ENCODE measurements at regions of chr7 and their contacts with region 1.

Region 1: DNA sequence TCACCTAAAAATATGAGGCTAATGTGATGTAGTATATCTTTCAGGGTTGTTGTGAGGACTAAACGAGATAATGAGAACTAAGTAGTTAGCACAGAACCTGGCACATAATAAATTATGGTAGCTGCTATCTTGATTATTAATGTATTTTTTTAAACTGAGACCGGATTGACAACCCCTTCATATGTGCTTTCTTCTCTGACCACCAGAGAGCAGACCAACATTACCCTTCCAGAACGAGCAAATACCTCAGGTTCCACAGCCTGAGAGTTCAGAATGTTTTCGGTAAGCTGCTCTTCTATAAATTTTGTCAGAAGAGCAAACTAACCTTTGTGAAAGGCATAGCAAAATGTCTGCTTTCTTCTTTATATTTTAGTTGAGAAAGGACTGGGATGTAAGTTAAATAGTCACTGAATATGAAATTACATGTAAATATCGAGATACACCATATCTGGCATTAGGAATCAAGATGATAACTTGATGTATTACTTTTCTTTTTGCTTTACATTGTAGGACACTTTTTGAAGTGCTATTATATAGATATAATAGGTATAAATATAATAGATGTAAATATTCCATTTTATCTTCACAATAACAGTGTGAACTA is 13.6 kb upstream of the BPGM start:
- DNase-seq: peak in 1 of 2 donors; percentile 83
- ATAC-seq: peak; percentile 73 to 90 (median 89)
- H3K4me3 ChIP-seq: no peak overlapping the region
- H3K4me3 Mint-ChIP-seq: no peak overlapping the region
- H3K27ac ChIP-seq: no peak overlapping the region
- H3K27ac Mint-ChIP-seq: no peak overlapping the region
- H3K4me1 ChIP-seq: no peaks in the 10 kb centered on the region
- H3K4me1 Mint-ChIP-seq: peaks cover 16 to 17% of the 10 kb centered on the region in 2 donors
- H3K27me3 ChIP-seq: peaks cover 3% of the 10 kb centered on the region
- H3K27me3 Mint-ChIP-seq: peaks cover 11 to 31% of the 10 kb centered on the region in 2 donors
- CTCF ChIP-seq: peak; percentile 78

Region 2: GRCh38 chr7:134654104-134654775 is 21.2 kb after region 1 on chr7:
- intact Hi-C with region 1: no loop called
- DNase-seq: no peak
- ATAC-seq: no peak
- H3K4me3 ChIP-seq: no peak overlapping the region
- H3K4me3 Mint-ChIP-seq: no peak overlapping the region
- H3K27ac ChIP-seq: no peak overlapping the region
- H3K27ac Mint-ChIP-seq: peak overlapping the region in 1 of 2 donors; percentile 63
- H3K4me1 ChIP-seq: no peaks in the 10 kb centered on the region
- H3K4me1 Mint-ChIP-seq: peaks cover 73 to 85% of the 10 kb centered on the region in 2 donors
- H3K27me3 ChIP-seq: no peaks in the 10 kb centered on the region
- H3K27me3 Mint-ChIP-seq: no peaks in the 10 kb centered on the region
- CTCF ChIP-seq: no peak

Region 3: DNA sequence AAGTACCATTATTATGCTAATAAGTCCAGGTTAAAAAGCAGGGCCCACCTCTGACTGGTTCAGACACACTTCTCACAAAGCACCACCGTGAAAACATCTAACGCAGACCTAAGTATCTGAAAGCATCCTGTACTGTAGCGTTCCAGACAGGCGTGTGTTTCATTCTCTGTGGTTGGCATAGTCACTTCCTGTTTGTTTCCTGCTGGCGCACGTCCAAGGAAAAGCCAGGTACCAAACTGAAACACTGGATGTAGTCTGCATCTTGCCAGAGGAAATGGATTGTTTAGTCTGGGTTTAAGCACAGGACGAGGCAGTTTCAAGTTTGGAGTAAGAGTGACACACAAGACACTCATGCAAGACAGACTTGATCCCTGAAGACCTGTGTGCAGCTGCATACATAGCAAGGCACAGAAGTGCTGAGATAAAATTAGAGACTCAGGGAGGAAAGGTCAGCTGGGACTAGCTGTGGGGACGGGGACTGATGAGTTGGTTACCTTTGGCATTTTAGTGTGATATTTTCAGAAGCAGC is 36.9 kb after region 1 on chr7:
- intact Hi-C with region 1: loop called (anchors 5 kb)
- DNase-seq: peak; percentile 26 to 94
- ATAC-seq: peak; percentile 74 to 80 (median 79)
- H3K4me3 ChIP-seq: no peak overlapping the region
- H3K4me3 Mint-ChIP-seq: peak overlapping the region; percentile 69
- H3K27ac ChIP-seq: peak overlapping the region; percentile 35
- H3K27ac Mint-ChIP-seq: peak overlapping the region; percentile 90 to 95
- H3K4me1 ChIP-seq: peaks cover 10% of the 10 kb centered on the region
- H3K4me1 Mint-ChIP-seq: peaks cover 48% of the 10 kb centered on the region in 2 donors
- H3K27me3 ChIP-seq: no peaks in the 10 kb centered on the region
- H3K27me3 Mint-ChIP-seq: no peaks in the 10 kb centered on the region
- CTCF ChIP-seq: no peak

Region 4: DNA sequence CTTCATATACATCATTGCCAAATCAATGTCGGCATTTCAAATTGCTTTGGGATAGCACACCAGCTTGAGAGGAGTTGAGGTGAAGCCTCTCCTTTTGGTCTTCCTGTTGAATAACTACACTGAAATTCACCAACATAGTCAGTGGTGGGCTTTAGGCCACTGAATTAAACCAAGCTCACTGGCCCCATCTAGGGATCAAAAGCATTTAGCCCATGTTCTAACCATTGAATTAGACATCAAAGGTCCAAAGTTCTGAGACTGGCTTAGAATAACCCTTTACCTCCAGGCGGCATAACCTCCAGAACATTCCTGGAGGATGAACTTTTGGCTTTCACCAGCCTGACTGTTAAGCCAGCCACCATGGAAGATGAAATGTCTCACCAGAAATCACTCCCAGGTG is 68.2 kb after region 1 on chr7:
- intact Hi-C with region 1: loop called (anchors 1 kb)
- DNase-seq: peak in 1 of 2 donors; percentile 67
- ATAC-seq: peak; percentile 55 to 78 (median 70)
- H3K4me3 ChIP-seq: no peak overlapping the region
- H3K4me3 Mint-ChIP-seq: no peak overlapping the region
- H3K27ac ChIP-seq: no peak overlapping the region
- H3K27ac Mint-ChIP-seq: no peak overlapping the region
- H3K4me1 ChIP-seq: no peaks in the 10 kb centered on the region
- H3K4me1 Mint-ChIP-seq: no peaks in the 10 kb centered on the region
- H3K27me3 ChIP-seq: no peaks in the 10 kb centered on the region
- H3K27me3 Mint-ChIP-seq: peaks cover 6 to 7% of the 10 kb centered on the region in 2 donors
- CTCF ChIP-seq: peak; percentile 50

Region 5: DNA sequence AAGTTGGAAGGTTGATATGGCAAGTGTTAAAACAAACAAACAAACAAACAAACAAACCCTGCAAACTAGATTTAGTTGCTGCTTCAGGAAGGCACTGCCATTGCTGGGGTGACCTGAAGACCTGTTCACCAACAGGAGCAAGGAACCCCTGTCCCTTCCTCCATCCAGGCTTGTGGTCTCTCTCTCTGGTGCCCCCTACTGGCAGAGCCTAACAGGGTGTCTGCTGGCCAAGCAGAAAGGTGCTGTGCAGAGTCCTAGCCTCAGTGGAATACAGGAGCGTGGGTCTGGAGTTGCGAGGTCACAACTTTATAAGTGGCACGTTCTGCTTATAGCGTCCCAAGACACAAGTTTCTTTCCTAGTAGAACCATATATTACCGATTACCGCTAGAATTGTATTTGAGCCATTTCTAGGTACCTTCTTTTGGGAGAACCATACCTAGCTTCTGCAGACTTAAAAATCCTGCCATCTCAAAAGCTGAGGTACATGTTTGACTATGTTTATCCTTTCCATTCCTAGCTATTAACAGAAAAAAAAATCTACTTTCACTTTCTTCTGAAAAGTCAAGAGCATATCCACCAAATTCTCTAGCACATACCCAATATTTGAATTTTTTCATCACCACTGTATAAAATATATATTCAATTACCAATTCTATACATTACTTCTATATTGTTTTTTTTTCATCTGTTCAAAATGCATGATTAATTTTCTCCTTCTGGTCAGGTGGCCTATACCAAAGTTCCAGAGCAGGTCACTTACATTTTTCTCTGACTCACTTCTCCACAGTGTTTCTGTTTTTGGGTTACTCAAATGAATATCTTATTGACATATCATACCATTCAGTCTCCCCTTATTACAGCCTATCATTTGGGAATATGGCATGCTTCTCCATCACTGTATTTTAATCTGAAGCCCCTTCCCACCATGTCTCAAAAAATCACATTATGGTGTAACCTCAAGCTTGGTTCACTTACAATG is 117.3 kb after region 1 on chr7:
- intact Hi-C with region 1: loop called (anchors 1 kb)
- DNase-seq: peak; percentile 46 to 82
- ATAC-seq: peak; percentile 80 to 87 (median 86)
- H3K4me3 ChIP-seq: no peak overlapping the region
- H3K4me3 Mint-ChIP-seq: no peak overlapping the region
- H3K27ac ChIP-seq: no peak overlapping the region
- H3K27ac Mint-ChIP-seq: no peak overlapping the region
- H3K4me1 ChIP-seq: no peaks in the 10 kb centered on the region
- H3K4me1 Mint-ChIP-seq: no peaks in the 10 kb centered on the region
- H3K27me3 ChIP-seq: no peaks in the 10 kb centered on the region
- H3K27me3 Mint-ChIP-seq: peaks cover 3 to 15% of the 10 kb centered on the region in 2 donors
- CTCF ChIP-seq: peak; percentile 72

Region 6: DNA sequence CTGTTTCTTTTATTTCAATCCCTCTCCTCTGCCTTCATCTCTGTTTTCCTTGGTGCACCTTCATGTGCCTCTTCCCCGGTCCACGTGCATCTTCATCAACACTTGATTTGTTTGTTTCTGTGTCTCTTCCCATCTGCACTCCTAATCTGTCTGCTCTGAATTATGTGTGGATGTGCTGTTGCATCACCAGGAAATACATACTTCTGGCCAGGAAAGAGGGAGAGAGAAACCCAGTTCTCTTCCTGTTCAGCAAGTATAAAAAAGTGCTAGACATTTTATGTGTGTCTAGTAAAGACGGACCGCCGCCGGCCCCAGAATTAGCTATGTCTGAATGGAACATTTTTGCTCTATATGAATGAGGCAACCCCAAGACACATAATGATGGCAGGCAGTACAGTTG is 240.2 kb after region 1 on chr7:
- intact Hi-C with region 1: no loop called
- DNase-seq: no peak
- ATAC-seq: no peak
- H3K4me3 ChIP-seq: no peak overlapping the region
- H3K4me3 Mint-ChIP-seq: no peak overlapping the region
- H3K27ac ChIP-seq: no peak overlapping the region
- H3K27ac Mint-ChIP-seq: no peak overlapping the region
- H3K4me1 ChIP-seq: no peaks in the 10 kb centered on the region
- H3K4me1 Mint-ChIP-seq: no peaks in the 10 kb centered on the region
- H3K27me3 ChIP-seq: no peaks in the 10 kb centered on the region
- H3K27me3 Mint-ChIP-seq: peaks cover 20 to 25% of the 10 kb centered on the region in 2 donors
- CTCF ChIP-seq: no peak

Region 7: DNA sequence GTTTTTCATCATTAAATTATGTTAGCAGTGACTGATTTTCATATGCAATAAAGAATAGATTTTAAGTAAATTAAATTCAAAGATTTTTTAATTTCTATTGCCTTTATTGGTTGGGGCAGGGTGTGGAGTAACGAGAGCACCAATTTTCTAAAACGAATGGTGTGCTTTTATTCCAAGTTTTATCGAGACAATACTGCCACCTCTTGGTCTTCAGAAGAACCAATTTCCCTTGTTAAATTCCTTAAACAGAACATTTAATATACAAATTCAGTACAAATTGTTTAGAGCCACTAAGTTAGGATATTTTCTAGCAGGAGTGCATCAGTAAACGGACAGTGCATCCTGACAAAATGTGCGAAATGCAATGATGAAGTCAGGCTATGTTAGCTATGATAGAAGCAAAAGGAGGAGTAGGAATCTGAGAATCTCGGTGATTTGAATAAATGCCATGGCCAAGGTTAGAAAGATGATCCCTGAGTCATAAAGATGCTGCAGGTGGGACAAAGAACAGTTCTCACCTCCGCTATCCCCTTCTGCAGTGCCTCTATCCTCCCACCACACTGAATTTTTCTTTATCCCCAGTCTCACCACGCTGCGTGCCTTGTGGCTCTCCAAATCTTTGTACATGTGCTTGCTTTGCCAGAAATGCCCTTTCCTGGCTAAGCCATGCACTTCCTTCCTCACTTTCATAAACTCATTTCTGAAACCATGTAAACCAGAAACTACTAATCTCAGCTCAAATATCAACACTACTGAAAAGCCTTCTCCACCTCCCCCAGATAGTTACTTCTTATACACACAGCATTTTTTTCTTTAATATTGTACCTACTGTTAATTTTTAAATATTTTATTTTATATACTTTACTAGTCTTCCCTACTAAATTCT is 321.4 kb after region 1 on chr7:
- intact Hi-C with region 1: loop called (anchors 2 kb)
- DNase-seq: peak in 1 of 2 donors; percentile 66
- ATAC-seq: no peak
- H3K4me3 ChIP-seq: no peak overlapping the region
- H3K4me3 Mint-ChIP-seq: no peak overlapping the region
- H3K27ac ChIP-seq: no peak overlapping the region
- H3K27ac Mint-ChIP-seq: no peak overlapping the region
- H3K4me1 ChIP-seq: no peaks in the 10 kb centered on the region
- H3K4me1 Mint-ChIP-seq: no peaks in the 10 kb centered on the region
- H3K27me3 ChIP-seq: no peaks in the 10 kb centered on the region
- H3K27me3 Mint-ChIP-seq: peaks cover 0 to 3% of the 10 kb centered on the region in 2 donors
- CTCF ChIP-seq: peak; percentile 53

Measured in natural killer cell (primary cell).